ENCODE measurements at regions of chr14 and their contacts with region 1.

Region 1: GRCh38 chr14:50954811-50955372 is 10.6 kb upstream of the PYGL start:
- DNase-seq: peak; percentile 85
- H3K4me3 ChIP-seq: no peak overlapping the region
- H3K27ac ChIP-seq: peak overlapping the region; percentile 98
- H3K4me1 ChIP-seq: peaks cover 18% of the 10 kb centered on the region
- H3K27me3 ChIP-seq: no peaks in the 10 kb centered on the region
- CTCF ChIP-seq: peak; percentile 58 to 61
- POLR2A ChIP-seq: no peak

Region 2: DNA sequence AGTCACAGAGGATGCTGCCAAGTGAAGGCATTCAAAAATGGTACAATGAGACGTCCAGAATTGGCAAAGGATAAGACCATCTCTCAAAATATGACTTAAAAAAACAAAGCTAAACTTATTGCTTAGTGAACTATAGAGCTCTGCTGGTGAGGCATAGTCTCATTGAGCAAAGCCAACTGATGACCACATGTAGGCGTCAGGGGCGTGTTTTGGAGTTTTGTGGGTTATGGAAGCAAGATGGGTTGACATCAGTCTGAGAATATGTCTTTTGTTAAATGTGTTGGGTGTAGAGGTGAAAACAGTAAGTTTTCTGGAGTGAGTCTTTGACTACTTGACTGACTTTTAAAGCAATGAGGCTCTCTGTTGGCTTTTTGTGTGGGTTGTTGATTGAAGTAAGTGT is 347.7 kb before region 1 on chr14:
- CTCF ChIA-PET with region 1: no interaction called
- POLR2A ChIA-PET with region 1: no interaction called
- dilution Hi-C with region 1: no loop called
- intact Hi-C with region 1: no loop called
- DNase-seq: no peak
- H3K4me3 ChIP-seq: no peak overlapping the region
- H3K27ac ChIP-seq: no peak overlapping the region
- H3K4me1 ChIP-seq: peaks cover 16% of the 10 kb centered on the region
- H3K27me3 ChIP-seq: no peaks in the 10 kb centered on the region
- CTCF ChIP-seq: no peak
- POLR2A ChIP-seq: no peak

Region 3: DNA sequence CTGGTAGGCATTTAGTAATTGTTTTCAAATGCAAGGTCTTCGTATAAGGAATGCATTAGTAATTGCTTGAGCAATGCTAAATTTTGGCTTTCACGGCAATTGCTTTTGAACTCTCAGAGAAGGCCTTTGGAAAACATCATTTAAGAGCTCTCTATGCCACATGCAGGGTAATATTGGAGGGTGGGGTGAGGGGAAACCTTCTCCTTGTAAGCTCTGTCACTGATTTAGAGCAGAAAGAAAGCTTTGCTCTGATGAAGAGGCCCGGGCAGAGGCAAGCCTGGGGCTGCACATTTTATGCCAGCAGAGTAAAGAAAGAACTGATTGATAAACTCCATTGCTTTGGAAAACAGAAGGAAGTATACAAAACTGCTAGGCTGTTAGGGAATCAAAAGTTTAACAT is 69.1 kb after region 1 on chr14:
- CTCF ChIA-PET with region 1: no interaction called
- POLR2A ChIA-PET with region 1: no interaction called
- dilution Hi-C with region 1: no loop called
- intact Hi-C with region 1: no loop called
- DNase-seq: no peak
- H3K4me3 ChIP-seq: no peak overlapping the region
- H3K27ac ChIP-seq: no peak overlapping the region
- H3K4me1 ChIP-seq: no peaks in the 10 kb centered on the region
- H3K27me3 ChIP-seq: peaks cover 5 to 14% of the 10 kb centered on the region in 2 experiments
- CTCF ChIP-seq: no peak
- POLR2A ChIP-seq: no peak

Region 4: GRCh38 chr14:51094901-51095853 is 140.3 kb after region 1 on chr14 and contains the start of gene TRIM9:
- CTCF ChIA-PET with region 1: interaction called, 3 read pairs
- POLR2A ChIA-PET with region 1: no interaction called
- dilution Hi-C with region 1: no loop called
- intact Hi-C with region 1: loop called (anchors 5 kb)
- DNase-seq: peak; percentile 89
- H3K4me3 ChIP-seq: peak within 1 kb of the TSS; percentile 4 to 48 (median 41)
- H3K27ac ChIP-seq: no peak within 1 kb of the TSS
- H3K4me1 ChIP-seq: peaks cover 10% of the 10 kb centered on the region
- H3K27me3 ChIP-seq: peaks cover 29 to 52% of the 10 kb centered on the region in 2 experiments
- CTCF ChIP-seq: no peak
- POLR2A ChIP-seq: no peak
- total RNA-seq, gene TRIM9: not detected in 2 replicates

Region 5: GRCh38 chr14:51219473-51220448 is 264.9 kb after region 1 on chr14:
- CTCF ChIA-PET with region 1: interaction called, 8 read pairs
- POLR2A ChIA-PET with region 1: no interaction called
- dilution Hi-C with region 1: no loop called
- intact Hi-C with region 1: loop called (anchors 1 kb)
- DNase-seq: peak; percentile 45
- H3K4me3 ChIP-seq: no peak overlapping the region
- H3K27ac ChIP-seq: no peak overlapping the region
- H3K4me1 ChIP-seq: no peaks in the 10 kb centered on the region
- H3K27me3 ChIP-seq: peaks cover 0 to 3% of the 10 kb centered on the region in 2 experiments
- CTCF ChIP-seq: peak; percentile 16 to 37
- POLR2A ChIP-seq: no peak

Region 6: DNA sequence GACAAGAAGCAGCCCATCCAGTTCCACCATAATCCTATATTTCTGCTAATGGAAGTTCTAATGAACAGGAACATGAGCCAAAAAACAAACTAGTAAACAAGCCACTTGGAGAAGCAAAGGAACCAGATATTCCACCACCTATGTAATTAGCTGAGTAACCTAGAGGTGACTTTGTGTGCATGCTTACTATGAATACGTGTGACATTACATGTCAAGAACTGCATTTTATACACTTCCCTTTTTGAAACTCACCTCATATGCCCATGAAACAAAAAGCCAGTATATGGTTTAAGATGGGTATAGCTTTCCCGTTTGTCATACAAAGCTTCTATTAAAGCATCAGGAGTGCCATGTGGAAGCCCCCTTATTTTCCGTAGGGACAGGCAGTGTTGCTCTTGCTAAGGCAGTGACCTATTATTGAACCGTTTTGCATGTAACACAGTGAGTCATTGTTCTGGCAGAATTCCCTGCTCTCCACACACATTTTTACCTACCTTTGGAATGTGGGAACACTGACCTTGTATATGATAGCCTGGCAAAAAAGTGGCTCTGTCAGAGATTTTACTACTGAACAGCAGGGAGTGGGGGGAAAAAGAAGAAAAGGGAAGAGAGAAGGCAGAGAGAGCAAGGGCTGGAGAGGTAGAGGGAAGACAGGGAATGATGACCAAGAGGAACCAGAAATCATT is 662.0 kb after region 1 on chr14:
- CTCF ChIA-PET with region 1: no interaction called
- POLR2A ChIA-PET with region 1: no interaction called
- dilution Hi-C with region 1: no loop called
- intact Hi-C with region 1: no loop called
- DNase-seq: peak; percentile 97
- H3K4me3 ChIP-seq: no peak overlapping the region
- H3K27ac ChIP-seq: peak overlapping the region; percentile 57
- H3K4me1 ChIP-seq: peaks cover 13% of the 10 kb centered on the region
- H3K27me3 ChIP-seq: no peaks in the 10 kb centered on the region
- CTCF ChIP-seq: no peak
- POLR2A ChIP-seq: no peak

Region 7: DNA sequence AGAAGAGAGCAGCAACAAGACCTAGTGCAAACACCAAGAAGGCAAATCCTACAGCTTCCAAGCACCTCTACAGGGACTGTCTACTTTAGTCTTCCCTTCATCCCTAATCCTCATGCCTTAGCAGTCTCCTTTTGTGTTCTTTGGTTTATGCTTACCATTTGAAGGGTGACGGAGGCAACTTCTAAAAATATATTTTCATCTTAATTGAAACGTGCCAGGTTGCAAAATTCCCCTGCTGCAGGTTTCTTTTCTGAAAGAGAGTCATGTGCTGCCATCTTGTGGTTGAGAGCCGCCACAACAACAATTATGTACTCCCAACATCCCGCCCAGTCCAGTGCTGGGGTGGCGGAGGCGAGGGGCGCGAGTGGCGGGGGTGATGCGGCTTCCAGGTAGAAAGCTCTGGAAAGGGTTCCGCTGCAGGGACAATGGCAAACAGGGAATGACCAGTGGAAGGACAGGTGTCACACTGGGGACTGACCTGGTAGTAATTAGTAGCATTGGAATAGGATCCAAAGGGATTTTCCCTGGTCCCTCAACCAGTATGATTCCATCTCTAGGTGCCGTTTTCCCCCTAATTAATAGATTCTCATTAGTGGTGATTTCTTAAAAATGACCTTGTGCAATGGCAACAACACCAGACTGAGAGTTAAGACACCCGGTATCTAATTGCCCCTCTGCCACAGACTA is 825.3 kb after region 1 on chr14:
- CTCF ChIA-PET with region 1: interaction called, 8 read pairs
- POLR2A ChIA-PET with region 1: no interaction called
- dilution Hi-C with region 1: no loop called
- intact Hi-C with region 1: loop called (anchors 1 kb)
- DNase-seq: peak; percentile 67
- H3K4me3 ChIP-seq: no peak overlapping the region
- H3K27ac ChIP-seq: no peak overlapping the region
- H3K4me1 ChIP-seq: peaks cover 3% of the 10 kb centered on the region
- H3K27me3 ChIP-seq: peaks cover 18 to 38% of the 10 kb centered on the region in 2 experiments
- CTCF ChIP-seq: peak; percentile 66 to 78
- POLR2A ChIP-seq: no peak

Measured in endothelial cell of umbilical vein (primary cell).